Activated naive CD4-positive, alpha-beta T cell treated with anti-CD3 and anti-CD28 coated beads for 36 hours (primary cell): ENCODE measurements at regions of chr6 and their contacts with region 1.

Region 1: DNA sequence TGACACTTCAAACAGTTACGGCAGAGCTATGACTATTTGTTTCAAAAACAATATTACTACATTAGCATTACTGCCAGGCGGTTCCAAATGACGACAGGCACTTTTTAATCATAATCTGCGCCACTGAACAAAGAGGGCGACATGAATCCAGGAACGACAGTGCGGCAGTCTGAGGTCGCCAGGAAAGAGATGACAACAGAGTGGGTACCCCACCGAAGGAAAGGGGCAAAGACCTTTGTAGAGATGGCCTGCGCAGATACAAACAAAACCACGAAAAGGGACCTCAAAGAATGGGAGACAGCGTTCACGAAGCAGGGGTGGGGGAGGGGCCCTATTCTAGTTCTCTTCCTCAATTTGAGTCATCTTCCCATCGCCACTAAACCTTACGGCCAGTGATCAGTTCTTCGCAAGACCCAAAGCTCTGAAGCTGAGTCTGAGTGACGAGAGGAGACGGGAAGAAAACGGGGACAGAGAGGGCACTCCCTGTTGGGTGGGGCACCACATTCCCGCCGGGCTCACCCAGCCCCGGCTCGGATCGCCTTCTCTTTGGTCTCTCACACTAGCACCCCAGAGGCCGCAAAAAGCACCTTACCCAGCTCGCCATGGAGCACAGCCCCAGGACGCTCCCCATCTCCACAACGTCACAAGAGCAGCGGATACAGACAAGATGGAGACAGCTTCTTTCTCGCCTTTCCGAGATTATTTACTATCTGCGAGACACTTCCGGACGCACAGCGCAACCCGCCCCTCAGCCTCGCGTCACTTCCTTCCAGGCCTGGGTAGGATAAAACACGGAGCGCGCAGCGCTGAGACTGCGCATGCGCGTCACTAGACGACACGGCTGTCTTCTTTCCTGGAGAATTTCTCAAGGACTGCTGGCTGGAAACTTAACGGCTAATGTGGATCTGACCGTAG is at the start of gene SERINC1:
- DNase-seq: peak; percentile 95
- H3K4me3 Mint-ChIP-seq: peak within 1 kb of the TSS; percentile 97
- H3K27ac Mint-ChIP-seq: peak within 1 kb of the TSS; percentile 100
- H3K4me1 Mint-ChIP-seq: peaks cover 37% of the 10 kb centered on the region
- H3K27me3 Mint-ChIP-seq: no peaks in the 10 kb centered on the region
- total RNA-seq, gene SERINC1: 50.1 to 50.4 TPM

Region 2: GRCh38 chr6:121334299-121335086 is 1136.9 kb before region 1 on chr6 and contains the start of gene TBC1D32:
- CTCF ChIA-PET with region 1: no interaction called
- intact Hi-C with region 1: loop called (anchors 2 kb)
- DNase-seq: peak; percentile 87
- H3K4me3 Mint-ChIP-seq: peak within 1 kb of the TSS; percentile 98
- H3K27ac Mint-ChIP-seq: peak within 1 kb of the TSS; percentile 97
- H3K4me1 Mint-ChIP-seq: peaks cover 38% of the 10 kb centered on the region
- H3K27me3 Mint-ChIP-seq: no peaks in the 10 kb centered on the region
- total RNA-seq, gene TBC1D32: 6.9 to 8.2 TPM

Region 3: GRCh38 chr6:122285292-122285913 is 186.0 kb before region 1 on chr6:
- CTCF ChIA-PET with region 1: no interaction called
- intact Hi-C with region 1: no loop called
- DNase-seq: no peak
- H3K4me3 Mint-ChIP-seq: no peak overlapping the region
- H3K27ac Mint-ChIP-seq: no peak overlapping the region
- H3K4me1 Mint-ChIP-seq: no peaks in the 10 kb centered on the region
- H3K27me3 Mint-ChIP-seq: no peaks in the 10 kb centered on the region

Region 4: DNA sequence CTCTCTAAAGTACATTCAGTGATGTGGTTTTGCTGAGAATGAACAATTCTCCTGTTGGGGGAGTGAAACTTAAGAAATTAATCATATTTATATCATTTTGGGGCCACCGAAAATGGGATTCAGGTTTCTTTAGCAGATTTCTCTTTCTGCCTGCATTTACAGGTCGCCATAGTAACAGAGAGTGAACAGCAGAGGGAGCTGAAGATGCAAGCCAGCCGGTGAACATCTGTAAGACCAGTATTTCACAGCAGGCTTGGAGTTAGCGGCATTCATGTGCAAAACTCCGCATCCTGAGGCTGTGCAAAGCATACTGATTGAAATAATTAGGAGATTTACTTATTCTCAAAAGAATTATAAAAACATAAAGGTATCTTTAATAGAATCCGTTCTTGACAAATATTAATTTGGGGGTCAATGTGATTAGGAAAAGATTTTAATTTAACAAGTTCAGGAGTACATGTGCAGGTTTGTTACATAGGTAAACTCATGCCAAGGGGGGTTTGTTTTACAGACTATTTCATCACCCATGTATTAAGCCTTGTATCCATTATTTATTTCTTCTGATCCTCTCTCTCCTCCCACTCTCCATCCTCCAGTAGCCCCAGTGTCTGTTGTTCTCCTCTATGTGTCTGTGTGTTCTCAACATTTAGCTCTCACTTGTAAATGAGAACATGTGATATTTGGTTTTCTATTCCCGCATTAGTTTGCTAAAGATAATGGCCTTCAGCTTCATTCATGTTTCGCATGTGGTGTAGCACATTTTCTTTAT is 89.7 kb before region 1 on chr6:
- CTCF ChIA-PET with region 1: no interaction called
- intact Hi-C with region 1: loop called (anchors 1 kb)
- DNase-seq: peak; percentile 79
- H3K4me3 Mint-ChIP-seq: no peak overlapping the region
- H3K27ac Mint-ChIP-seq: no peak overlapping the region
- H3K4me1 Mint-ChIP-seq: peaks cover 6% of the 10 kb centered on the region
- H3K27me3 Mint-ChIP-seq: peaks cover 3% of the 10 kb centered on the region

Region 5: DNA sequence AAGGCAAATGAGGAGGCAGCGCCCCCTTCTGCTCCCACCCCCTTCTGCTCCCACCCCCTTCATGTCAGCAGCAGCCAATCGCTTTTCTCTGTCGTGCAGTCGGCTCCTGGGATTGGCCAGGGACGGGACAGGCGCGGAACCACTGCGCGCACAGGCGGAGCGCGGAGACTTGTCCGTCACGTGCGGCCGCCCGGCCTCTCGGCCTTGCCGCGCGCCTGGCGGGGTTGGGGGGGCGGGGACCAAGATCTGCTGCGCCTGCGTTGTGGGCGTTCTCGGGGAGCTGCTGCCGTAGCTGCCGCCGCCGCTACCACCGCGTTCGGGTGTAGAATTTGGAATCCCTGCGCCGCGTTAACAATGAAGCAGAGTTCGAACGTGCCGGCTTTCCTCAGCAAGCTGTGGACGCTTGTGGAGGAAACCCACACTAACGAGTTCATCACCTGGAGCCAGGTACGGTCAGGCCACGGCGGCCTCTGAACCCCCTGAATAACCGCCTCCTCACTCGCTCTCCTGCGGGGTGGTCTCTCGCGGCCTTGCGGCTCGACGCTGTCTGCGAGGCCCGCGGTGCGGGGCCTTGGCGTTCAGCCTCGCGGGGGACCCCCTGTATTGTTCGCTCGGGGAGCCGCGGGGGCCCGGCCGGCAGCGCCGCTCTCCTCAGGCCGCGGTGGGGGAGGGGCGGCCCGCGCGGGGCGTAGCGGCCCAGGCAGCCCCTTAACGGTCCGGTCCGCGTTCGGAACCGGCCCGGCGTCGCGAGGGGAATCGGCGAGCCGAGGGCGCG is 71.8 kb before region 1 on chr6 and contains the start of gene HSF2:
- CTCF ChIA-PET with region 1: no interaction called
- intact Hi-C with region 1: loop called (anchors 1 kb)
- DNase-seq: peak; percentile 97
- H3K4me3 Mint-ChIP-seq: peak within 1 kb of the TSS; percentile 97
- H3K27ac Mint-ChIP-seq: peak within 1 kb of the TSS; percentile 95
- H3K4me1 Mint-ChIP-seq: peaks cover 42% of the 10 kb centered on the region
- H3K27me3 Mint-ChIP-seq: no peaks in the 10 kb centered on the region
- total RNA-seq, gene HSF2: 22.0 to 27.0 TPM

Region 6: DNA sequence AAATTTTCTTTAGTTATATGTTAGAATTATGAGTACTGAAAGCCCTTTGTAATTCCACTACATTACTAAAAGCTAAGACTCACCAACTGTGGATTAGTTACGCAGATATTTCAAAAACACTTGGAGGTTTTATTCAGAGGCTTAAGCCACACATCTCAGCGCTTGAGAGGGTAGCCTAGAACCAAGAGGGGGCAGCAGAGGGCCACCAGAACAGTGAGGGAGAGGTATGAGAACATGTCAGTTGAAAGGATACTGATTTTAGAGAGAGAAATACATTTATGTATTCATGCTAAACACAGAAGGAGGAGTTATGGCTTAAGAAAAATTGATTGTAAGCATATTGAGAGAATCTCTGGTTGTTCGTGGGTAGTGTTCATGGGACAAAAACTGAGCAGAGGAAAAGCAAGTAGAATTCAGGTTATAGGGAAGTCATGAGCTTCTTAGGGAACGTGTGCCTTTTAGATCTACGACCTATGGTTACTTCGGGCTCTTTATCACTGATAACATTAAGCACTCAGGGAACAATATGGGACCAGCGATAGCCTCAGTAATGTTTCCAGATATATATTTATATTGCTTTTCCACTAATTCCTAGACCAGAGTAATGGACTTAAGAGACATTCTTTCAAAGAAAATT is 20.7 kb after region 1 on chr6:
- CTCF ChIA-PET with region 1: interaction called, 15 read pairs
- intact Hi-C with region 1: no loop called
- DNase-seq: peak; percentile 87
- H3K4me3 Mint-ChIP-seq: no peak overlapping the region
- H3K27ac Mint-ChIP-seq: no peak overlapping the region
- H3K4me1 Mint-ChIP-seq: peaks cover 10% of the 10 kb centered on the region
- H3K27me3 Mint-ChIP-seq: no peaks in the 10 kb centered on the region

Region 7: DNA sequence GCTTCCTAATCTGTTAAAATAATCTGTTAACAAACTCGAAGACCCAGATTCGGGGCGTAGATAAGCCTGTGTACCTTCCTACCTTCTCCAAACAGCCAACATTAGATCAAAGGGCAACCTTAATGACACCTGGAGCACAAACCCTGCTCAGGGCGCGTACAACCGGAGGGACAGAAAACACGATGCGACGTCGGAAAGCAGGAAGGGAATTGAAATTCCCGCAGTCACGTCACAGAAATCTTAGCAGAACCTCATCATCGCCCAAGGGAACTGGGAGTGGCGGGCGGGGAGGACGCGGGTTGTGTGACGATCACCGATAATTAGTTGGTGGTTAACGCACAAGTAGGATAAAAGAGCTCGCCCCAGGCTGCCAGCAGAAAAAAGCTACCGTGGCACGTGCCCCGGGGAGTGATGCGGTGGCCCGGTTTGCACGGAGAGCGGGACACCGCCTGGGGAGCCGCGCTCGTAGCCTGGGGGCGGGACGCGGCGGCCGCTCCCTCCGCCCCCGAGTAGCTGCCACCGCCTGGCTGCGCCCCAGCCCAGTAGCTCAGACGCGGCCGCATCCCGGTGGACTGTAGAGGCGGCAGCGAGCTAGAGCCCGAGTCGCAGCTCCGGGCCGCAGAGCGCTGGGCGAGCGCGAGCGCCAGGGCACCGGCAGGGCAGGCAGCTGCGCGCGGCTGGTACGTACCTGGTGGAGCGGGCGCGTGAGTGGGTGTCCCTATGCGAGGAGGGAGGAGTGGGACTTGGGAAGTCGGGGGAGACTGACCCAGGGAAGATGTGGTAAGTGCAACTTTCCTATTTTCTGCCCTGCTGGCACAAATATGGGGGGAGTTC is 138.7 kb after region 1 on chr6 and contains the start of gene PKIB:
- CTCF ChIA-PET with region 1: interaction called, 3 read pairs
- intact Hi-C with region 1: loop called (anchors 5 kb)
- DNase-seq: peak; percentile 67
- H3K4me3 Mint-ChIP-seq: peak within 1 kb of the TSS; percentile 77
- H3K27ac Mint-ChIP-seq: no peak within 1 kb of the TSS
- H3K4me1 Mint-ChIP-seq: peaks cover 14% of the 10 kb centered on the region
- H3K27me3 Mint-ChIP-seq: peaks cover 30% of the 10 kb centered on the region
- total RNA-seq, gene PKIB: 0.67 TPM in 1 of 2 experiments, not detected in the other

Region 8: GRCh38 chr6:122751326-122751725 is 280.0 kb after region 1 on chr6:
- CTCF ChIA-PET with region 1: no interaction called
- intact Hi-C with region 1: loop called (anchors 2 kb)
- DNase-seq: peak; percentile 18
- H3K4me3 Mint-ChIP-seq: no peak overlapping the region
- H3K27ac Mint-ChIP-seq: peak overlapping the region; percentile 33
- H3K4me1 Mint-ChIP-seq: peaks cover 37% of the 10 kb centered on the region
- H3K27me3 Mint-ChIP-seq: no peaks in the 10 kb centered on the region